ENCODE measurements at regions of chr12 and their contacts with region 1.

Region 1: DNA sequence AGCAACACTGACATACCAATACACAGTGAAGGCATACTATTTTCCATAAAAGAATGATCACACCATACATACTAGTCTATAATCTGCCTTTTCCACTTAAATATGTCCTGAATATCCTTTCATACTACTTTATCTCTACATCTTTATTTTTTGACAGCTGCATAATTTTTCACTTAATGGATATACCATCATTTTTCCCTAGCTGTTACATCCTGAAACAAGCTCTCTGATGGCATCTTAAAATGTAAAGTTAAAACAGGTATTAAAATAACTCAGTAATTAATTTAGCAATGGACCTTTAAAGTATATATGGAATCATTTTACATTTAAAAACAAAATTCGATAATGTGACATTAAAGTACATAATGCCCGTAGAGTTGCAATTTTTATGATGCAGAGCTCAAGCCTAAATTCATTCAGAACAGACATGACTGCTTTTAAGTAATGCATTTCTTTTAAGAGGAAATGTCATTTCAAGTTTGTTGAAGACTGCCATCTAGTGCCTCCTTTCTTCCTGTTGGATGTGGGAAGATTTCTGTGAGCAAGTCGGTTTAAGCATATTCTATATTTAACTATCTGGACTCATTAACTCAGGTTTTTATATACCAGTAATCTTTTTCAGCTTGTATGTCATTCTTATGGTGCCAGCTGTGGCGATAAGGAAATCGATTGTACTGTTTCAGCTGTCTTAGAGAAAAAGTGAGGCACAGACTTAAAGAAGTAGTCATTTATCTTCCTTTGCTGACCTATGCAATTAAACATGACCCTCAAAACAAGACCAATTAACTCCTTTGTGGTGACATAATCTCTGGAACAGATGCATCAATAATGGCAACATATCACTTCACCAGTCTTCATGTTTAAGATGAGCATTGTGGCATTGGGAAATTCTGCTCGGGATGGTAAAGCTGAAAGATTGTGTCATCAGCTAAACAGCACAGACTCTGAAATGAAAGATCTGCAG is 20.3 kb downstream of the PRICKLE1 start:
- DNase-seq: no peak
- H3K4me3 ChIP-seq: no peak overlapping the region
- H3K27ac ChIP-seq: no peak overlapping the region
- H3K4me1 ChIP-seq: peaks cover 39% of the 10 kb centered on the region
- H3K27me3 ChIP-seq: no peaks in the 10 kb centered on the region
- CTCF ChIP-seq: peak; percentile 77

Region 2: DNA sequence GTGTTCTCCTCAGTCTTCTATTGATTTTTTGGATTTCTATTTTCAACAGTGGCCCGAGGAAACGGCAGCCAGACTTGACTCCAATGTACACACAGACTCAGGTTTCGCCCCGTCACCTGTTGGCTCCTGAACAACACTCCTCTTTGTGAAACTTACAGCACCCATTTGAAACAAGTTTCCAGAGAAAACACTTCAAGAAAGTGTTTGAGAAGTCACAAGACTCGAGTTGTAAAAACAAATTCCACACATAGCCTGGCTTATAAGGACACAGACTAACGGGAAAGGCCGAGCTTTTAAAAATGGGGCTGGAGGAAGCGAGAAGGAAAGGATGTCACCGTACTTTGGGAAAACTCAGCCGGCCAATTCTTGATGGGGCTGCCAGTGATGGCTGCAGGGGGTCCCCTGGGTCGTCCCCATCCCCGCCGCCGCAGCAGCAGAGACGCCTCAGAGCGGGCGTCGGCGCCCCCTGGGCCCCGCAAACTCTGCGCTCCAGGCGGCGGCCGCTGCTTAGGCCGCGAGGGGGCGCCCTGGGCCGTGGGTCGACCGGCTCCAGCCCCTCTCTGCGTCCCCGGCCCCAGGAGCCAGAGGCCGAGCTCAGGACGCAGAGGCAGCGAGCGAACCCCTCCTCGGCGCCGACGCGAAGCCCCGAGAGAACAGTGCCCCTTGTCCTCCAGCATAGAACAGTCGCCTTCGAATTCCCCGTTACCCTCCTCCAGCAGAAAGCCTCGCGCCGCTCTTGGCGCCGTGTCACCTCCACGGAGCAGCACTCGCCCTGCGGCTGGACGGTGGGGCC is 86.6 kb before region 1 on chr12:
- intact Hi-C with region 1: loop called (anchors 2 kb)
- DNase-seq: peak; percentile 79
- H3K4me3 ChIP-seq: peak overlapping the region; percentile 90
- H3K27ac ChIP-seq: peak overlapping the region; percentile 97
- H3K4me1 ChIP-seq: peaks cover 85% of the 10 kb centered on the region
- H3K27me3 ChIP-seq: no peaks in the 10 kb centered on the region
- CTCF ChIP-seq: peak; percentile 94

Region 3: GRCh38 chr12:42504049-42504448 is 65.2 kb before region 1 on chr12:
- intact Hi-C with region 1: no loop called
- DNase-seq: no peak
- H3K4me3 ChIP-seq: no peak overlapping the region
- H3K27ac ChIP-seq: no peak overlapping the region
- H3K4me1 ChIP-seq: peaks cover 20% of the 10 kb centered on the region
- H3K27me3 ChIP-seq: no peaks in the 10 kb centered on the region
- CTCF ChIP-seq: no peak

Region 4: DNA sequence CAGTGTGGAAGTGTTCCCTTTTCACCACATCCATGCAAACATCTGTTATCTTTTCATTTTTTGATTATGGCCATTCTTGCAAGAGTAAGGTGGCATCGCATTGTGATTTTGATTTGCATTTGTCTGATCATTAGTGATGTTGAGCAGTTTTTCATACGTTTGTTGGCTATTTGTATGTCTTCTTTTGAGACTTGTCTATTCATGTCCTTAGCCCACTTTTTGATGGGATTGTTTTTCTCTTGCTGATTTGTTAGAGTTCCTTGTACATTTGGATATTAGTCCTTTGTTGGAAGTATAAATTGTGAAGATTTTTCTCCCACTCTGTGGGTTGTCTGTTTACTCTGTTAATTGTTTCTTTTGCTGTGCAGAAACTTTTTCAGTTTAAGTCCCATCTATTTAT is 264.8 kb after region 1 on chr12:
- intact Hi-C with region 1: no loop called
- DNase-seq: no peak
- H3K4me3 ChIP-seq: no peak overlapping the region
- H3K27ac ChIP-seq: no peak overlapping the region
- H3K4me1 ChIP-seq: no peaks in the 10 kb centered on the region
- H3K27me3 ChIP-seq: no peaks in the 10 kb centered on the region
- CTCF ChIP-seq: no peak